CD14-positive monocyte (primary cell): ENCODE measurements at regions of chr14 and their contacts with region 1.

Region 1: GRCh38 chr14:65179918-65180724 is 77.8 kb upstream of the MAX start:
- DNase-seq: peak in 2 of 3 donors; percentile 9 to 75
- H3K4me3 ChIP-seq: no peak overlapping the region
- H3K4me3 Mint-ChIP-seq: no peak overlapping the region
- H3K27ac ChIP-seq: no peak overlapping the region
- H3K27ac Mint-ChIP-seq: no peak overlapping the region
- H3K4me1 ChIP-seq: no peaks in the 10 kb centered on the region
- H3K4me1 Mint-ChIP-seq: no peaks in the 10 kb centered on the region
- H3K27me3 ChIP-seq: no peaks in the 10 kb centered on the region
- H3K27me3 Mint-ChIP-seq: peaks cover 2 to 7% (median 4%) of the 10 kb centered on the region in 3 donors
- CTCF ChIP-seq: no peak

Region 2: GRCh38 chr14:65214741-65215140 is 34.6 kb after region 1 on chr14:
- intact Hi-C with region 1: loop called in 1 of 2 experiments (anchors 5 kb)
- DNase-seq: no peak
- H3K4me3 ChIP-seq: no peak overlapping the region
- H3K4me3 Mint-ChIP-seq: no peak overlapping the region
- H3K27ac ChIP-seq: no peak overlapping the region
- H3K27ac Mint-ChIP-seq: peak overlapping the region in 2 of 7 donors; percentile 14 to 42
- H3K4me1 ChIP-seq: peaks cover 17 to 20% of the 10 kb centered on the region in 2 donors
- H3K4me1 Mint-ChIP-seq: peaks cover 22% of the 10 kb centered on the region
- H3K27me3 ChIP-seq: no peaks in the 10 kb centered on the region
- H3K27me3 Mint-ChIP-seq: peaks cover 0 to 1% (median 0%) of the 10 kb centered on the region in 3 donors
- CTCF ChIP-seq: no peak

Region 3: DNA sequence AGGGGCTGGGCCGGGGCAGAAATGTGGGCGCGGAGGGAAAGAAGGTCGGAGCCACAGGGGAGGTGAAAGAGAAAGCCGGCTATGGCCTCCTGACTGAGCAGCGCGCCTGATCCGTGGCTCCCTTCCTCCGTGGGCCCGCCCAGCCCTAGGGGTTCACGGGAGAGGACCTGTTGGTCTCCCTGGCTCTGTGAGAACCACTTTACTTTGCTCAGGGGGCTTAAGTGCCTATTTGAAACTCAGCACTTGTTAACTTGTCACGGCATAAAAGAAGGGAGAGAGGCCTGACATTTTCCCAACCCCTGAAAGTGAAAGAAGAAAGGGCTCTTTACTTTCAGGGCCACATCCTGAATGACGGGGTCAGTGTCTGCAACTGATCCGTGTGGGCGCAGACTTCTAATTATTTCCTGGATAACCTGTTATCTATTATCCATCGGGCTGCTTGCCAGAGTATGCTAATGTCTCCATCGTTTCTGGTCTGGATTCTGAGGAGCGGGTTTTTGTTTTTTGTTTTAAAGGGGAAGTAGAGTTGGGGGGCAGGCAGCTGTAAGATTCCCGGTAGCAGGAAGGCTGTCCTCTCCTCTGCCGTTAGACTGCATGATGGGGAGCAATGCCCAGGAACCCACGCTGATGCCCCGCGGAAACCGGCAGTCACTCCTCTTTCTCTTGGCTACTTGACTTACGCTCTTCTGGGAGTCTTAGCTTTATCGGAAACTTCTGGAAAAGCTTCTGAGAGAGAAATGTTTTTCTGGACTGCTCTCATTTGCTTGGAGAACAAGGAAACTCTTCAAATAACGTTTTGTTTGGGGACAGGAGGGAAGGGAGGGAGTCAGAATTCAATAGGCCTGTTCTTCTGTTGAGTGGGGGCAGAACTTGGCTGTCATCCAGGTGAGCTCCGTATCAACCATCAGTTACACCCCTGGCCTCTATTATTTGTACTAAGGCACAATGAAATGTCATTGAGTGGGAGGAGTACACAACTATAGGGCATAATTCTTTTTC is 49.9 kb after region 1 on chr14:
- intact Hi-C with region 1: no loop called
- DNase-seq: peak in 2 of 3 donors; percentile 25
- H3K4me3 ChIP-seq: peak overlapping the region; percentile 61 to 84 (median 82)
- H3K4me3 Mint-ChIP-seq: peak overlapping the region; percentile 88 to 98
- H3K27ac ChIP-seq: peak overlapping the region in 1 of 2 donors; percentile 84
- H3K27ac Mint-ChIP-seq: peak overlapping the region; percentile 80 to 96 (median 93)
- H3K4me1 ChIP-seq: peaks cover 8 to 10% of the 10 kb centered on the region in 2 donors
- H3K4me1 Mint-ChIP-seq: peaks cover 20% of the 10 kb centered on the region
- H3K27me3 ChIP-seq: no peaks in the 10 kb centered on the region
- H3K27me3 Mint-ChIP-seq: peaks cover 2 to 7% (median 5%) of the 10 kb centered on the region in 3 donors
- CTCF ChIP-seq: no peak

Region 4: GRCh38 chr14:65356327-65356852 is 176.3 kb after region 1 on chr14:
- intact Hi-C with region 1: no loop called
- DNase-seq: no peak
- H3K4me3 ChIP-seq: no peak overlapping the region
- H3K4me3 Mint-ChIP-seq: no peak overlapping the region
- H3K27ac ChIP-seq: no peak overlapping the region
- H3K27ac Mint-ChIP-seq: peak overlapping the region in 1 of 7 donors; percentile 26
- H3K4me1 ChIP-seq: peaks cover 0 to 4% of the 10 kb centered on the region in 2 donors
- H3K4me1 Mint-ChIP-seq: peaks cover 5% of the 10 kb centered on the region
- H3K27me3 ChIP-seq: no peaks in the 10 kb centered on the region
- H3K27me3 Mint-ChIP-seq: peaks cover 2 to 6% (median 5%) of the 10 kb centered on the region in 3 donors
- CTCF ChIP-seq: no peak